CD8-positive, alpha-beta T cell (primary cell): ENCODE measurements at regions of chr1 and their contacts with region 1.

Region 1: GRCh38 chr1:87084244-87084836 is 169.9 kb downstream of the HS2ST1 start:
- DNase-seq: peak in 2 of 9 experiments; percentile 33 to 53
- ATAC-seq: peak; percentile 46
- H3K4me3 ChIP-seq: no peak overlapping the region
- H3K4me3 Mint-ChIP-seq: no peak overlapping the region
- H3K27ac ChIP-seq: no peak overlapping the region
- H3K27ac Mint-ChIP-seq: no peak overlapping the region
- H3K4me1 ChIP-seq: no peaks in the 10 kb centered on the region
- H3K4me1 Mint-ChIP-seq: peaks cover 4% of the 10 kb centered on the region
- H3K27me3 ChIP-seq: no peaks in the 10 kb centered on the region
- H3K27me3 Mint-ChIP-seq: no peaks in the 10 kb centered on the region
- CTCF ChIP-seq: peak; percentile 79

Region 2: DNA sequence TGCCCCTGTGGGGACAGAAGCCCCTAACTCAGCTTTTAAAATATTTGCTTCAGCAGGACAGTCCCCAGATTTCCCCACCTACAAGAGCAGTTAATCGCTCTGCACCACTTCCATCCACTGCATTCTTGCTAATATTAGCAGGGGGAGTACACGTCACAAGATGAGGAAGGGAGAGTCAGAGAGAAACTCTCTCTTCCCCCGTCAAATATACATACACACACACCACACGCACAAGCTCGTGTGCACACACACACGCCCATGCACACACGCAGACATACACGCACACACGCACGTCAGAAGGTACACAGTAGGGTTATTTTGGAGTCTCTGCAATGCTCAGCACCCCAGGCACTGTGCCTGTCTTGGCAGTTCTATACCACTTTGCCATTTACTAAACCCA is 613.5 kb before region 1 on chr1:
- CTCF ChIA-PET with region 1: interaction called, 5 read pairs
- POLR2A ChIA-PET with region 1: no interaction called
- intact Hi-C with region 1: loop called in 1 of 2 experiments (anchors 5 kb)
- DNase-seq: no peak
- ATAC-seq: no peak
- H3K4me3 ChIP-seq: no peak overlapping the region
- H3K4me3 Mint-ChIP-seq: no peak overlapping the region
- H3K27ac ChIP-seq: no peak overlapping the region
- H3K27ac Mint-ChIP-seq: no peak overlapping the region
- H3K4me1 ChIP-seq: no peaks in the 10 kb centered on the region
- H3K4me1 Mint-ChIP-seq: no peaks in the 10 kb centered on the region
- H3K27me3 ChIP-seq: peaks cover 0 to 3% of the 10 kb centered on the region in 2 experiments
- H3K27me3 Mint-ChIP-seq: peaks cover 13% of the 10 kb centered on the region
- CTCF ChIP-seq: no peak

Region 3: GRCh38 chr1:86825319-86825718 is 259.0 kb before region 1 on chr1:
- CTCF ChIA-PET with region 1: interaction called, 10 read pairs
- POLR2A ChIA-PET with region 1: no interaction called
- intact Hi-C with region 1: no loop called
- DNase-seq: no peak
- ATAC-seq: no peak
- H3K4me3 ChIP-seq: no peak overlapping the region
- H3K4me3 Mint-ChIP-seq: no peak overlapping the region
- H3K27ac ChIP-seq: no peak overlapping the region
- H3K27ac Mint-ChIP-seq: no peak overlapping the region
- H3K4me1 ChIP-seq: no peaks in the 10 kb centered on the region
- H3K4me1 Mint-ChIP-seq: no peaks in the 10 kb centered on the region
- H3K27me3 ChIP-seq: no peaks in the 10 kb centered on the region
- H3K27me3 Mint-ChIP-seq: peaks cover 3% of the 10 kb centered on the region
- CTCF ChIP-seq: no peak

Region 4: GRCh38 chr1:86833461-86834215 is 250.7 kb before region 1 on chr1:
- CTCF ChIA-PET with region 1: interaction called, 105 read pairs
- POLR2A ChIA-PET with region 1: no interaction called
- intact Hi-C with region 1: loop called (anchors 1 kb)
- DNase-seq: peak; percentile 4 to 76 (median 53)
- ATAC-seq: peak; percentile 72
- H3K4me3 ChIP-seq: no peak overlapping the region
- H3K4me3 Mint-ChIP-seq: no peak overlapping the region
- H3K27ac ChIP-seq: no peak overlapping the region
- H3K27ac Mint-ChIP-seq: no peak overlapping the region
- H3K4me1 ChIP-seq: no peaks in the 10 kb centered on the region
- H3K4me1 Mint-ChIP-seq: peaks cover 4% of the 10 kb centered on the region
- H3K27me3 ChIP-seq: no peaks in the 10 kb centered on the region
- H3K27me3 Mint-ChIP-seq: no peaks in the 10 kb centered on the region
- CTCF ChIP-seq: peak; percentile 64

Region 5: GRCh38 chr1:86965012-86965826 is 119.1 kb before region 1 on chr1:
- CTCF ChIA-PET with region 1: interaction called, 3 read pairs
- POLR2A ChIA-PET with region 1: no interaction called
- intact Hi-C with region 1: loop called (anchors 2 to 10 kb)
- DNase-seq: peak in 4 of 9 experiments; percentile 13 to 53 (median 31)
- ATAC-seq: no peak
- H3K4me3 ChIP-seq: no peak overlapping the region
- H3K4me3 Mint-ChIP-seq: no peak overlapping the region
- H3K27ac ChIP-seq: no peak overlapping the region
- H3K27ac Mint-ChIP-seq: no peak overlapping the region
- H3K4me1 ChIP-seq: no peaks in the 10 kb centered on the region
- H3K4me1 Mint-ChIP-seq: no peaks in the 10 kb centered on the region
- H3K27me3 ChIP-seq: no peaks in the 10 kb centered on the region
- H3K27me3 Mint-ChIP-seq: no peaks in the 10 kb centered on the region
- CTCF ChIP-seq: peak; percentile 52

Region 6: GRCh38 chr1:87024936-87025540 is 59.3 kb before region 1 on chr1:
- CTCF ChIA-PET with region 1: no interaction called
- POLR2A ChIA-PET with region 1: no interaction called
- intact Hi-C with region 1: loop called in 1 of 2 experiments (anchors 5 kb)
- DNase-seq: peak in 2 of 9 experiments; percentile 6 to 28
- ATAC-seq: no peak
- H3K4me3 ChIP-seq: no peak overlapping the region
- H3K4me3 Mint-ChIP-seq: no peak overlapping the region
- H3K27ac ChIP-seq: no peak overlapping the region
- H3K27ac Mint-ChIP-seq: no peak overlapping the region
- H3K4me1 ChIP-seq: no peaks in the 10 kb centered on the region
- H3K4me1 Mint-ChIP-seq: peaks cover 2% of the 10 kb centered on the region
- H3K27me3 ChIP-seq: no peaks in the 10 kb centered on the region
- H3K27me3 Mint-ChIP-seq: no peaks in the 10 kb centered on the region
- CTCF ChIP-seq: no peak

Region 7: GRCh38 chr1:87074001-87074795 is 10.1 kb before region 1 on chr1:
- CTCF ChIA-PET with region 1: interaction called, 20 read pairs
- POLR2A ChIA-PET with region 1: no interaction called
- intact Hi-C with region 1: no loop called
- DNase-seq: no peak
- ATAC-seq: no peak
- H3K4me3 ChIP-seq: no peak overlapping the region
- H3K4me3 Mint-ChIP-seq: no peak overlapping the region
- H3K27ac ChIP-seq: no peak overlapping the region
- H3K27ac Mint-ChIP-seq: no peak overlapping the region
- H3K4me1 ChIP-seq: no peaks in the 10 kb centered on the region
- H3K4me1 Mint-ChIP-seq: no peaks in the 10 kb centered on the region
- H3K27me3 ChIP-seq: no peaks in the 10 kb centered on the region
- H3K27me3 Mint-ChIP-seq: no peaks in the 10 kb centered on the region
- CTCF ChIP-seq: no peak

Region 8: DNA sequence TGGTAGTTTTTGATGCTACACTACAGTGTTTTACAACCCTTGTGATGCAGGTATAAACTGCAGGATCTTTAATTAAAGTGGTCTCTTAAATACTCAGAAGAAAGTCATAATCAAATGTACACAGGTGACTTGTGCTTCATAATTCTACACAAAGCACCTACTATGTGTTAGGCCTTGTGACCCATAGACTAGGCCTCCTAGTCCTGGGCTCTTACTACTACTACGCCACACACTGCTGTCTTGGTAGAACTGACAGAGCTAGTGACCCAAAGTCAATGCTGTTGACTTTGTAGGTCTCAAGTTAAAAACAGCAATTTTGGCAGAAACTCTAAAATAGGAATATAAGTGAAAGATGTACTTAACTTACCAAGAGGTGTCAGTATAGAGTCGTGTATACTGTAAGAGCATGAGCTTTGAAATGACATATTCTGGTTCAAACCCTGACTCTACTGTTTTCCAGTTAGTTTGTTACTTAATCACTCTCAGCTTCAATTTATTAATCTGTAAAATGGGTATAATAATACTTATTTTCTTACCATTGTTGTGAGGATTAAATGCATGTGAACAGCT is 195.7 kb after region 1 on chr1:
- CTCF ChIA-PET with region 1: no interaction called
- POLR2A ChIA-PET with region 1: no interaction called
- intact Hi-C with region 1: no loop called
- DNase-seq: no peak
- ATAC-seq: no peak
- H3K4me3 ChIP-seq: no peak overlapping the region
- H3K4me3 Mint-ChIP-seq: no peak overlapping the region
- H3K27ac ChIP-seq: no peak overlapping the region
- H3K27ac Mint-ChIP-seq: no peak overlapping the region
- H3K4me1 ChIP-seq: no peaks in the 10 kb centered on the region
- H3K4me1 Mint-ChIP-seq: no peaks in the 10 kb centered on the region
- H3K27me3 ChIP-seq: no peaks in the 10 kb centered on the region
- H3K27me3 Mint-ChIP-seq: peaks cover 3% of the 10 kb centered on the region
- CTCF ChIP-seq: no peak

Region 9: DNA sequence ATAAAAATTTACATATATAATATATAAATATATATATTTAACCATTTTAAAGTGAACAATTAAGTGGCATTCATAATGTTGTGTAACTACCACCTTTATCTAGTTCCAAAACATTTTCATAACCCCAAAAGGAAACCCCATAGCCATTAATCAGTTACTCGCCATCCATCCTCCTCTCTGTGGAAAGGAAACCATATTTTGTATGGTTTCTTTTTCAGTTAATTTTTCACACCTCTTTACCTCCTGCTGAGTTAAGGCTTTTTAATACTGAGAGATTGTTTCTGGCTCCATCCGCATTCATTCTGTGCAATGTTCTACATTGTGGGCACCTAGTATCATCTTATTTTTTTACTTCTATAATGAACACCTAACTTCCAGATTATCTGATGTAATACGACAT is 756.4 kb after region 1 on chr1:
- CTCF ChIA-PET with region 1: no interaction called
- POLR2A ChIA-PET with region 1: no interaction called
- intact Hi-C with region 1: no loop called
- DNase-seq: no peak
- ATAC-seq: no peak
- H3K4me3 ChIP-seq: no peak overlapping the region
- H3K4me3 Mint-ChIP-seq: no peak overlapping the region
- H3K27ac ChIP-seq: no peak overlapping the region
- H3K27ac Mint-ChIP-seq: no peak overlapping the region
- H3K4me1 ChIP-seq: no peaks in the 10 kb centered on the region
- H3K4me1 Mint-ChIP-seq: no peaks in the 10 kb centered on the region
- H3K27me3 ChIP-seq: no peaks in the 10 kb centered on the region
- H3K27me3 Mint-ChIP-seq: peaks cover 7% of the 10 kb centered on the region
- CTCF ChIP-seq: no peak